PC-9 (cell line): ENCODE measurements at regions of chr11 and their contacts with region 1.

Region 1: GRCh38 chr11:131748151-131749050 is 378.0 kb downstream of the NTM start:
- DNase-seq: peak in 1 of 2 experiments; percentile 23
- H3K4me3 ChIP-seq: no peak overlapping the region
- H3K27ac ChIP-seq: no peak overlapping the region
- H3K4me1 ChIP-seq: no peaks in the 10 kb centered on the region
- H3K27me3 ChIP-seq: peaks cover 10% of the 10 kb centered on the region
- CTCF ChIP-seq: peak; percentile 77

Region 2: DNA sequence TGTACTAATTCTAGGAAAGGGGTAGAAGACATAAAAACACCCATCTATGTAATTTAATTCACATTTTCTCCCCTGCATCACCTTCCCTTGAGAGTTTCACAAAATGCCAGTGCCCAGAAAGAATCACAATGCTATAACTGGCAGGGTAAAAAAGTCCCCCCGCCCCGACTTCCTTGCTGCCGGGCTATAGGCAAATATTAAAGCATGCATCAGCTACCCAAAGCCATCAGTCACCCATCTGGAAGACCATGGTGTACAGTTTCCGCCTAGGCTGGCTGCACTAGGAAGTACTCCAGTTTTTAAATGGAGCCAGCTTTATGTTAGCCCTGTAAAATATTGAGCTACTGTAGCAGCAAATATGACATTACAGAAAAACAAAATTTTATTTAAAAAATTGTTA is 1521.0 kb before region 1 on chr11:
- CTCF ChIA-PET with region 1: interaction called, 10 read pairs
- POLR2A ChIA-PET with region 1: no interaction called
- intact Hi-C with region 1: no loop called
- DNase-seq: no peak
- H3K4me3 ChIP-seq: no peak overlapping the region
- H3K27ac ChIP-seq: no peak overlapping the region
- H3K4me1 ChIP-seq: no peaks in the 10 kb centered on the region
- H3K27me3 ChIP-seq: no peaks in the 10 kb centered on the region
- CTCF ChIP-seq: no peak